Calu3 (cell line): ENCODE measurements at regions of chr17 and their contacts with region 1.

Region 1: GRCh38 chr17:39863918-39864746 is at the start of gene IKZF3:
- DNase-seq: peak; percentile 100
- H3K4me3 Mint-ChIP-seq: peak within 1 kb of the TSS; percentile 67
- H3K27ac Mint-ChIP-seq: peak within 1 kb of the TSS; percentile 31
- H3K4me1 Mint-ChIP-seq: peaks cover 38% of the 10 kb centered on the region
- H3K27me3 Mint-ChIP-seq: peaks cover 53% of the 10 kb centered on the region
- CTCF ChIP-seq: no peak
- total RNA-seq, gene IKZF3: 30.9 and 41.0 TPM in 2 replicates

Region 2: DNA sequence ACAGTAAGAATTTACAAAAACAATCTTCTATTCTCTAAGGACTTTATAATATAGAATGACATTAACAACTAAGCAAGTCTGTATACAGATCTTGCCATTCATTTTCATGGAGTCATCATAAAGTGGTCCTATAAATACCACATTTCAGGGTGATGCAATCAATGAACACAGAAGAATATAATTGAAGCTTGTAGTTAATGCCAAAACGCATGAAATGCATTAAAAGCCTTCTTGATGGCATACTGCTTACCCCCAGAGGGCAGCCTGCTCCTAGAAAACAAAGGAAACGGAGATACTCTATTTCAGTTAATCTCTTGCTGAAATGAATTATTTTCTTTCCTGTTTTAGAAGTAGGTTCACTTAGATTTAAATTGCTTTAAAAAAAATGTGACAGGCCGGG is 593.2 kb before region 1 on chr17:
- CTCF ChIA-PET with region 1: no interaction called
- intact Hi-C with region 1: no loop called
- DNase-seq: peak; percentile 72
- H3K4me3 Mint-ChIP-seq: no peak overlapping the region
- H3K27ac Mint-ChIP-seq: peak overlapping the region; percentile 26
- H3K4me1 Mint-ChIP-seq: no peaks in the 10 kb centered on the region
- H3K27me3 Mint-ChIP-seq: no peaks in the 10 kb centered on the region
- CTCF ChIP-seq: peak; percentile 58

Region 3: DNA sequence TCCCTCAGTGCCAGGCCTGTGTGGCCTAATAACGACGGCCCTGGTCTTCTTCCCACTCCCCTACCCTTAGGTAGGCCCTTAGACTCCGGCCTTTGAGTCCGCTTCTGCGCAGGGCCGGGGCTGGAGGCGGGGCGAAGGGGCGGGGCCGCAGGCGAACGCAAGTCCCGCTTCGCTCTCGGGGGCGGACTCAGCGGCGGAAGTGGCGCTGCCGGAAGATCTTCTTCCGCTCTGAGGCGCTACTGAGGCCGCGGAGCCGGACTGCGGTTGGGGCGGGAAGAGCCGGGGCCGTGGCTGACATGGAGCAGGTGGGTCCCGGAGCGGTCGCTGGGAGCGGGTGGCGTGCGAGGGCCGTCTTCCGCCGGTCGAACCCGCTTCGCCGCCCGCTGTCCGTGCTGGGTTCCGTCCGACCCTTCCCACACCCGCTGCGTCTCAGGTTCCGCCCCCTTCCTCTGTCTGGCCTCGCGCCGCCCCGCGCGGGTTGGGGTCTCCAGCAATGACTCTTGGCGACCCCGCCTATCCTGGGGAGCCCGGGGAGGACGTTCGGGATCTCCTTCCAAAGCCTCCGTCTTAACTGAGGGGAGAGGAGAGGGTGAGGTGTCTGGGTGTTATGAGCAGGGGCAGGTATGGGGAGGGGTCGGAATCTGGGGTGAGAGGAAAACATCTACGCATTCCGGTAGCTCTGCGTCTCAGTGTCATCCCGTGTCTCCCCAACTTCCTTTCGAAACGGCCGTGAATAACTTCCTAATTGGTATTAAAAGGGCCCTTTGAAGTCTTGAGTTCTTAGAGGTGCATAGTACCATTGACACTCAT is 227.0 kb before region 1 on chr17 and contains the start of gene STARD3:
- CTCF ChIA-PET with region 1: interaction called, 38 read pairs
- intact Hi-C with region 1: loop called (anchors 1 kb)
- DNase-seq: no peak
- H3K4me3 Mint-ChIP-seq: peak within 1 kb of the TSS; percentile 71
- H3K27ac Mint-ChIP-seq: peak within 1 kb of the TSS; percentile 28
- H3K4me1 Mint-ChIP-seq: peaks cover 61% of the 10 kb centered on the region
- H3K27me3 Mint-ChIP-seq: peaks cover 5% of the 10 kb centered on the region
- CTCF ChIP-seq: no peak
- total RNA-seq, gene STARD3: 2,579 and 2,697 TPM in 2 replicates

Region 4: DNA sequence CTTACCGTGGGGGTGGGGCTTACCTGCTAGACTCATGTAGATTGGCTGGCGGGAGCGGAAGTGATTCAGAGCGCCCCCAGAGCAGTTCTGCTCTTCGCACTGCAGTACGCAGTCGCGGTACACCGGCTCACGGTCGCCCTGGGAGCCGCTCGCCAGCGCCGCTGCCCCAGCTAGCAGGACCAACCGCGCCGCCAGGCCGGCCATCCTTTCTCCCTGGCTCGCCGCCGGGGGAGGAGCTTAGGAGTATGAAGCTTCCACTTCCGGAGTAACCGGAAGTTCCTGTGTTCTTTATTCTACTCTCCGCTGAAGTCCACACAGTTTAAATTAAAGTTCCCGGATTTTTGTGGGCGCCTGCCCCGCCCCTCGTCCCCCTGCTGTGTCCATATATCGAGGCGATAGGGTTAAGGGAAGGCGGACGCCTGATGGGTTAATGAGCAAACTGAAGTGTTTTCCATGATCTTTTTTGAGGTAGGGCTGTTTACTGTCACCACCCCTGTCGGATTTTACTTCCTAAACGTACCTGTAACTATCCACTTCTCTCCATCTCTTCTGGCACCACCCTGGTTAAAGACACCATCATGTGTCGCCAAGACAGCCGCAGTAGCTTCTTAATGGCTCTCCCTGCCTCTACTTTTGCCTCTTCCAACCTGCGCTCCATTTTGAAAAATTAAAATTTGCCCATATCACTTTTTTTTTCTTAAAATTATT is 176.2 kb before region 1 on chr17 and contains the start of gene PGAP3:
- CTCF ChIA-PET with region 1: interaction called, 26 read pairs
- intact Hi-C with region 1: no loop called
- DNase-seq: peak; percentile 100
- H3K4me3 Mint-ChIP-seq: peak within 1 kb of the TSS; percentile 64
- H3K27ac Mint-ChIP-seq: peak within 1 kb of the TSS; percentile 63
- H3K4me1 Mint-ChIP-seq: peaks cover 27% of the 10 kb centered on the region
- H3K27me3 Mint-ChIP-seq: no peaks in the 10 kb centered on the region
- CTCF ChIP-seq: no peak
- total RNA-seq, gene PGAP3: 1,186 and 1,276 TPM in 2 replicates

Region 5: DNA sequence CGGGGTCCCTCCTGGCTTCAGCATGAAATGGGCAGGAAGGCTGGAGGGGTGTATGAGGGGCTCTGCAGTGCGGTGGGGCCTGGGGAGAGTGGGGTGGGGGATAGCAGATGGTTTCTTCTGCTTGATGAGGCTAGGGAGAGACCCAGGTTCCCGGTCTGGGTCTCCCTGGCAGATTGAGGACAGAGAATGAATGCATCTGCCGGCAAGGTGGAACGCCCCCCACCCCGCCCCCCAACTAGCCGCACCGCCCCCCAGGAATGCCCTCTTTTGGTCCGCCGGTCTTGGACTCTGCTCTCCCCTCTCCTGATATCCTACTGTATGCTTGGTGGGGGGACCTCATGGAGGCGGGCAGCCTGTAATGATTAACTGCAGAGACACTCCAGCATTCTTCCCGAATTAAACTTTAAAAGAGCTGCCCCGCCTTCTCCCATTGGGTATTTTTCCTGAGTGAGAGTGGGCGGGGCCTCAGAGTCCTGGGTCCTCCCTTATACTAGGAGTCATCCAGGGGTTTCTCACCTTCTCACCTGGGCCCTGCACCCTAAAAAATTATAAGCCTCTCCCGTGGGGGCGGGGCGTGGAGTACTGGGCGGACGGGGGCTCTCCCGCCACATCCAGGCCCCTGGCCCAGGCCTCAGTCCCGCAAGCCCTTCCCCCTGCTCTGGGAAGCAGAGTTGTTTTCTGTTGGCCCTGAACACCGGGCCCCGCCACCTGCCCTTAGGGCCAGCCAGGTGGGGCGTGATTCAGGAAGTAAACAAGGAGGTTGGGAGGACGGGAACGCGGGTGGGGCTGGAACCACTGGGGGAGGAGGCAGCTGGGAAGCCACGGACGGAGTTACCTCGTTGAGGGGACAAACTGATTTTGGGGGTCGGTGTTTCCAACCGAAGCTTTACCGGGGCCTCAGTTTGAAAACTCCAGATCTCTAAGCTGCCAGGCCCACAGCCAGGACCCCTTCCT is 124.9 kb before region 1 on chr17:
- CTCF ChIA-PET with region 1: interaction called, 217 read pairs
- intact Hi-C with region 1: loop called (anchors 1 kb)
- DNase-seq: peak; percentile 100
- H3K4me3 Mint-ChIP-seq: peak overlapping the region; percentile 77
- H3K27ac Mint-ChIP-seq: peak overlapping the region; percentile 21
- H3K4me1 Mint-ChIP-seq: peaks cover 54% of the 10 kb centered on the region
- H3K27me3 Mint-ChIP-seq: no peaks in the 10 kb centered on the region
- CTCF ChIP-seq: no peak

Region 6: DNA sequence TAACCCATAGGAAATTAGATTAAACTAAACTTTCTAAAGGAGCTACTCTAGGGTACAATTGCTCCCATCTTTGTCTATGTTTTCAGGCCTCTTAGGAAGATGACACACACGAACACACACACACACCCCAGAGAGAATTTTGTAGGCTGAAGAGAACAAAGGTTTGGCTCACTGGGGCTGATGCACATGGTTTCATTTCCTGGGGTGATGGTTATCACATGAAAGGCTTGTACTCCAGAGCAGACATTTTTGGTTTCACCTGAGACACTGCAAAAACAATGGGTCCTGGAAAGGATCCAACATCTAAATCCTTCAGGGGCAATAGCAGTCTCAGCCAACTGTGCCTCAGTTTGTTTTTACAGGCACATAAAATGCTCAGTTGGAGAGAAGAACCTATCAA is 63.6 kb before region 1 on chr17:
- CTCF ChIA-PET with region 1: interaction called, 130 read pairs
- intact Hi-C with region 1: no loop called
- DNase-seq: peak; percentile 85
- H3K4me3 Mint-ChIP-seq: no peak overlapping the region
- H3K27ac Mint-ChIP-seq: no peak overlapping the region
- H3K4me1 Mint-ChIP-seq: peaks cover 17% of the 10 kb centered on the region
- H3K27me3 Mint-ChIP-seq: no peaks in the 10 kb centered on the region
- CTCF ChIP-seq: no peak

Region 7: GRCh38 chr17:39835038-39835786 is 28.9 kb before region 1 on chr17:
- CTCF ChIA-PET with region 1: interaction called, 498 read pairs
- intact Hi-C with region 1: no loop called
- DNase-seq: peak; percentile 79
- H3K4me3 Mint-ChIP-seq: no peak overlapping the region
- H3K27ac Mint-ChIP-seq: no peak overlapping the region
- H3K4me1 Mint-ChIP-seq: no peaks in the 10 kb centered on the region
- H3K27me3 Mint-ChIP-seq: no peaks in the 10 kb centered on the region
- CTCF ChIP-seq: no peak

Region 8: GRCh38 chr17:39927101-39927928 is 63.2 kb after region 1 on chr17 and contains the starts of genes LRRC3C and ORMDL3:
- CTCF ChIA-PET with region 1: interaction called, 79 read pairs
- intact Hi-C with region 1: no loop called
- DNase-seq: no peak
- H3K4me3 Mint-ChIP-seq: peak within 1 kb of the TSS; percentile 74
- H3K27ac Mint-ChIP-seq: peak within 1 kb of the TSS; percentile 66
- H3K4me1 Mint-ChIP-seq: peaks cover 60% of the 10 kb centered on the region
- H3K27me3 Mint-ChIP-seq: no peaks in the 10 kb centered on the region
- CTCF ChIP-seq: no peak
- total RNA-seq, gene LRRC3C: not detected in 2 replicates
- total RNA-seq, gene ORMDL3: 1,738 and 1,968 TPM in 2 replicates

Region 9: DNA sequence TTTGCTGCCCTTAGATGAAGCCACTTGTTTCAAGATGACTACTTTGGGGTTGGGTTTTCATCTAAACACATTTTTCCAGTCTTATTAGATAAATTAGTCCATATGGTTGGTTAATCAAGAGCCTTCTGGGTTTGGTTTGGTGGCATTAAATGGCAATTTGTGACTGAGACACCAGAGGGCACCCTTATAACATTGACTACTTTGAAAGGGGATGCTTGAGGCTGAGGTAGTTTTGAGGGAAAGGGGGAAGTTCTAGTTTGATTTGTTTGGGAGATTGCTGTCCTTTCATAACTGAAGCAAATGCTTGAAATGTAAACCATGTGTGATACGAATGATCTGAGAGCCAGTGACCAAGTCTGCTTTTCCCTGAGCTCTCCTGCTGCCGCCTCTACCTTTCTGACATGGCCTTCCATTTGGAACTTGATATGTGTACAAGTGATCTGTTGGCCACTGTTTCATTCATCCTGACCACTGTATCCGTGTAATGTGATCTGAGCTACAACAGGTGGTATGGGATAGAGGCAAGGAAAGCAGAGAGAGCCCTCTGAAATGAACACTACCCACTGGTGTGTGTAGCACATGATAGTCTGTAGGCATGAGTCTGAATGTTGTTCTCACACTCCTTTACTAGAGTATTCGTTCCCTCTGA is 439.0 kb after region 1 on chr17:
- CTCF ChIA-PET with region 1: no interaction called
- intact Hi-C with region 1: no loop called
- DNase-seq: peak; percentile 94
- H3K4me3 Mint-ChIP-seq: no peak overlapping the region
- H3K27ac Mint-ChIP-seq: peak overlapping the region; percentile 26
- H3K4me1 Mint-ChIP-seq: peaks cover 34% of the 10 kb centered on the region
- H3K27me3 Mint-ChIP-seq: no peaks in the 10 kb centered on the region
- CTCF ChIP-seq: peak; percentile 99